ENCODE measurements at regions of chr3 and their contacts with region 1.

Region 1: DNA sequence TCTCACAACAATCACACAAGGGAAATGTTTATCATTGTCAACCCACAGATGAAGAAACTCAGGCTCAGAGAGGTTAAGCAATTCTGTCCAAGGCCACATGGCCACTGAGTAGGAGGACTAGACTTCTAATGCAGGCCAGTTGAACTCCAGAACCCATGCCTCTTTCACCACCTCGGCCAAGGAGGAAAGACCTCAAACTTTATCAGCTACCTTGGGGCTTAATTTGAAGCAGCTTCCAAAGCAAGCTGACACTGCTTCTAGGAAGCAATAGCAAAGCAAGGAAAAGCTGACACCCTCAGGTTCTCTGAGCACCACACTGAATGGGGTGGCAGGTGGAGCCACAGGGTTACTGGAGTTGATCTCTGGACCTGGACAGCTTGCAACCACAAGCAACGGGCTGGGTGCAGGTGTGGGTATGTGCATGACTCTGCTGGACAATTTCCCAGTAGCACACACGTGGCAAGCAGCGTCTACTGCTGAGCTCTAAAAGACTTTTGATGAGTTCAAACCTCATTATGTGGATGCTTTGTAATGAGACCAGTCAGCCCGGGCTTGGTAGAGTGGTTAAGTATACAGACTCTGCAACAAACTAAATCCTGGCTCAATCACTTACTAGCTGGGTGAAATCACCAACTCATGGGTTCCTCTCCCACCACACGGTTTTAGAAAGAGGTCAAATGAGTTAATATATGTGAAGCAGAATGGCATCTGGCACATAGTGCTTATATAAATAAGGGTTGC is 23.1 kb downstream of the CCNL1 start:
- DNase-seq: no peak
- H3K4me3 ChIP-seq: no peak overlapping the region
- H3K27ac ChIP-seq: peak overlapping the region; percentile 13
- H3K27me3 ChIP-seq: no peaks in the 10 kb centered on the region
- CTCF ChIP-seq: no peak

Region 2: GRCh38 chr3:156519758-156520162 is 617.1 kb before region 1 on chr3:
- CTCF ChIA-PET with region 1: interaction called, 11 read pairs
- POLR2A ChIA-PET with region 1: no interaction called
- DNase-seq: no peak
- H3K4me3 ChIP-seq: no peak overlapping the region
- H3K27ac ChIP-seq: no peak overlapping the region
- H3K27me3 ChIP-seq: no peaks in the 10 kb centered on the region
- CTCF ChIP-seq: no peak

Region 3: GRCh38 chr3:156681002-156681401 is 455.8 kb before region 1 on chr3:
- CTCF ChIA-PET with region 1: interaction called, 18 read pairs
- POLR2A ChIA-PET with region 1: no interaction called
- DNase-seq: peak; percentile 63
- H3K4me3 ChIP-seq: no peak overlapping the region
- H3K27ac ChIP-seq: no peak overlapping the region
- H3K27me3 ChIP-seq: no peaks in the 10 kb centered on the region
- CTCF ChIP-seq: no peak

Region 4: DNA sequence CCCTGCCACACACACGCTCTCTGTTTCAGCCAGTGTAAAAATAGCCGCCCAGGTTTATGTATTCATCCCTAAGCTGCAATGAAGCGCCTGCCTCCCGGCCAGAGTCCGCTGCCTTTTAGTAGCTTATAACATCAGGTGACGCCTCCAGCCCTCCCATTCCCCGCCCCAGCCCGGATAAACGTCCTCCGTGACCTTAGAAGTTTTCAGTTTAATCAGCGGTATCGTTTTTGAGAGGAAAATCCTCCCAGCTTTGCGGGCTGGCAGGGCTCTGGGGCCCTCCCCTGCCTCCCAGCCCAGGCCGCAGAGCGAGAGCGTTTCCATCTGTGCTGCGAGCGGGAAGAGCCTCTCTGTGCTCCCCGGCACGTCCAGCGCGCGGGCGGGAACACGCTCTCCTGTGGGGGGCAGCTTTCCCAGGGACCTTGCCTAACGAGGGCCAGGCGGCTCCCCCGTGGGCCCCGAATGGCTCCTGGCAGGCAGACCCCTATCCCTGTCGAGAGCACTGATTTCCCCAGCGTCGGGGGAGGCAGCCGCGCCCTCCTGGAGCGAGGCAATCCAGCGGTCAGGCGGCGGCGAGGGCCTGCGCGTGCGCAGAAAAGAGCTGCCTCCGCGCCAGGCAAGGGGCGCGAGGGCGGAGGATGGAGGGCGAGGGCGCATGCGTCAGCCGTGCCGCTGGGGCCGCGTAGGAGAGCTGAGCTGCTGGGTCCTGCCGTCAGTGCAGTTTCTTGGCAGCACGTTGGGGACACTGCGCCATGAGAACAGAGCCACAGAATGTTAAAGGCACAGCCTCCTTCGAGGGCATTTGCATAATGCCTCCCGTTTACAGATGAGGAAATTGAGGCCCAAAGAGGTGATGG is 48.0 kb before region 1 on chr3:
- CTCF ChIA-PET with region 1: interaction called, 86 read pairs
- POLR2A ChIA-PET with region 1: interaction called, 9 read pairs
- DNase-seq: peak; percentile 88
- H3K4me3 ChIP-seq: peak overlapping the region; percentile 72
- H3K27ac ChIP-seq: peak overlapping the region; percentile 99
- H3K27me3 ChIP-seq: no peaks in the 10 kb centered on the region
- CTCF ChIP-seq: no peak

Region 5: GRCh38 chr3:157148196-157148889 is 11.5 kb after region 1 on chr3:
- CTCF ChIA-PET with region 1: interaction called, 24 read pairs
- POLR2A ChIA-PET with region 1: no interaction called
- DNase-seq: no peak
- H3K4me3 ChIP-seq: no peak overlapping the region
- H3K27ac ChIP-seq: no peak overlapping the region
- H3K27me3 ChIP-seq: no peaks in the 10 kb centered on the region
- CTCF ChIP-seq: no peak

Measured in AG04450 (cell line).